Uterus (tissue), 4 donors: ENCODE measurements at regions of chr5 and their contacts with region 1.

Region 1: DNA sequence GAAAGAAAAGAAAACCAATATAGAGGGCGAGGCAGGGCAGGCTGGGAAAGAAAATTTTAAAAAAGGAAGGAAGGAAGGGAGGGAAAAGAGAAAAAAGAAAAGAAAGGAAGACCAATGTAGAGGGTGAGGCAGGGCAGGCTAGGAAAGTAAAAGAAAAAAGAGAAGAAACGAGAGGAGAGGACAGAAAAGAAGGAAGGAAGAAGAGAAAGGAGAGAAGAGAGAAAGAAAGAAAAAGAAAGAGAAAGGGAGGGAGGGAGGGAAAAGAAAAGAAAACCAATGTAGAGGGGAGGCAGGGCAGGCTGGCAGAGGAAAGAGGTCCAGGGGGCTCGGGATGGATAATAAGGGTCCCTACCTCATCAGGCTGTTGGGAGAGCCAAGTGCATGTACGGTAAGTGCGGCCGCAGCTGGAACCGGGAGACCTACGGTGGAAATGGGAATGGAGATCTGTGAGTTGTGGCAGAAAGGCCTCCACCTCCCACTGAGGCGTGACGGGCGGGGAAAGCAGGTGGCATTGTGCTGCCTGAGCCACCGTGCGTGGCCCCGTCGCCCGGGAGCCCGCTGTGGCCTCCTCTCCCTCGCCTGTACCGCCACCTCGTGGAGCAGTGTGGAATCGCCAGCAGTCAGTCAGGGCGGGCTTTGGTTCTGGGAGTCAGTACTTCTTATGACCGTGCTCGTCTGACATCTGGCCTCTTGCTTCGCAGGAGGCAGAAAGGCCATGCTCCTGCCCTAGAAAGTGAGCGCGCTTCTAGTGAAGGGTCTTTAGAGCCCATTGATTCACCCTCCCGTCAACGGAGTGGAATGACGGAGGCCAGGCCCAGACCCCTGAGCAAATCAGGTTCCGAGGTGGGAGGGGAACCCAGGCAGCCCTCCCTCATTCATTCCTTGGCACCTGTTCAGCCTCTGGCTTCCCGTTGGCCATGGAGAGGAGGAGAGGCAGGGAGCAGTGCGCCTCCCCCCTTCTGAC is 10.4 kb upstream of the NHP2 start:
- DNase-seq: peak; percentile 72 to 85
- H3K4me3 ChIP-seq: no peak overlapping the region
- H3K27ac ChIP-seq: no peak overlapping the region
- H3K4me1 ChIP-seq: peaks cover 0 to 5% of the 10 kb centered on the region in 2 donors
- H3K27me3 ChIP-seq: no peaks in the 10 kb centered on the region
- CTCF ChIP-seq: peak; percentile 98 to 99 (median 98)
- POLR2A ChIP-seq: peak in 1 of 2 donors; percentile 19

Region 2: GRCh38 chr5:178069909-178070308 is 94.1 kb before region 1 on chr5:
- intact Hi-C with region 1: loop called (anchors 5 kb)
- DNase-seq: no peak
- H3K4me3 ChIP-seq: no peak overlapping the region
- H3K27ac ChIP-seq: no peak overlapping the region
- H3K4me1 ChIP-seq: no peaks in the 10 kb centered on the region
- H3K27me3 ChIP-seq: no peaks in the 10 kb centered on the region
- CTCF ChIP-seq: no peak
- POLR2A ChIP-seq: no peak

Region 3: DNA sequence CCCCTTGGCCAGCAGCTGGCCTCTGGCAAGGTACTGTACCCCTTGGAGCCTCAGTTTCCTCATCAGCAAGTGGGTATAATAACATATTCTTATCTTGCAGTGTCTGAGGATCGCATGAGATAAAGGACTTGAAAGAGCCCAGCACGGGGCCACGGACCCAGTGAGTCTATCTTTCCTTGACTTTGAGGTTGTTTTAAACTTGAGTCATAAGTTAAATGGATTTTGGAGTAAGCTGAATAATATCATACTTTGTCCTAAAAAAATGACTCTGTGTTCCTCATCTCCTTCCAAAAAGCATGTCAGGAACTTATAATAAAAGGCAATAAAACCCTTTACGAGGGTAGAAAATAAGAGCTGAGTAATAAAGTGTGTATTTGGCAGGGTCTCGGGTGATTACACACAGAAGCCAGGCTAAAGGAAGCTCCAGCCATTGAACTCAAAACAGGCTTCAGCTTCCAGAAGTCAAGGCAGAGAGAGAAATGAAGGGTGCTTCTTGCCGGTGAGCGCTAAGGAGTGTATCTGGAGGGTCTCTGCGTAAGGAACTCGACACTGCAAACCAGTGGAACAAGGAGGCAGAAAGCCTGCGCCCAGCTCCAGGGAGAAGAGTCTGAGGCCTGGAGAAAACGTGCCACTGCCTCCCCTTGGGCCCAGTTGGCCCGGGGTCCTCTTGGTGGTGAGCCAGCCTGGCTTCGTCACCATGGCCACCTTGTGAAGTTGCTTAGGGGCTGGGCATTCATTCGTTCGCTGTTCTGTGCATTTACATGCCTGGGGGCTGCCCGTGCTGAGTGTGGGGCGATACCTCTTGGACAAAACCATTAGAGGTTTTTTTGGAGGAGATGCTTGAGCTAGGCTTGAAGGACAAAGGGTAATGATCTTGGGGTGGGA is 140.9 kb after region 1 on chr5:
- intact Hi-C with region 1: no loop called
- DNase-seq: no peak
- H3K4me3 ChIP-seq: no peak overlapping the region
- H3K27ac ChIP-seq: peak overlapping the region in 1 of 2 donors; percentile 54
- H3K4me1 ChIP-seq: no peaks in the 10 kb centered on the region
- H3K27me3 ChIP-seq: no peaks in the 10 kb centered on the region
- CTCF ChIP-seq: no peak
- POLR2A ChIP-seq: no peak